HepG2 (cell line): ENCODE measurements at regions of chr16 and their contacts with region 1.

Region 1: DNA sequence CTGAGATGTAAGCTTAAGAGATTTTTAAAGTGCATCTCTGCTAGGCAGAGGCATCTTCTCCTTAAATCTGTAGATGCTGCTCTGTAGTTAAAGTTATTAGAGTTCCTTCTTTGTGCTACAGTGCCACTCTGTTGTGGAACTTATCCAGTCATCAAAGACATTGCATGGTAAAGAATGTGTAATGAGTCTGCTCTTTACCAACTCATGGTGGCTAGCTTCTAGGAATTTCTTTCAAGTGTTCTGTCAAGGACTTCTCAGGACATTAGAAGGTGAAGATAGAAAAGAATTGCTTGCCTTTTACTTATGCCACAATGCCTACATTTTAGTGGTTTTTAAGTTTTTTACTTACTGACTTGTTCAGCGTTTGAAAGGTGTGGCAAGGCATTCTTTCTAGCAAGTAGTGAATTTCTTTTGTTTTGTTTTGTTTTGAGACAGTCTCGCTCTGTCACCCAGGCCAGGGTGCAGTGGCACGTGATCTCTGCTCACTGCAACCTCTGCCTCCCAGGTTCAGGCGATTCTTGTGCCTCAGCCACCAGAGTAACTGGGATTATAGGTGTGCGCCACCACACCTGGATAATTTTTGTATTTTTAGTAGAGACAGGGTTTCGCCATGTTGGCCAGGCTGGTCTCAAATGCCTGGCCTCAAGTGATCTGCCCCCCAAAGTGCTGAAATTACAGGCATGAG is 20.3 kb upstream of the ARL2BP start:
- DNase-seq: no peak
- ATAC-seq: no peak
- H3K4me3 ChIP-seq: no peak overlapping the region
- H3K27ac ChIP-seq: no peak overlapping the region
- H3K4me1 ChIP-seq: no peaks in the 10 kb centered on the region
- H3K27me3 ChIP-seq: no peaks in the 10 kb centered on the region
- CTCF ChIP-seq: no peak
- EP300 ChIP-seq: no peak
- POLR2A ChIP-seq: no peak
- RAD21 ChIP-seq: no peak

Region 2: GRCh38 chr16:56294579-56294978 is 930.2 kb before region 1 on chr16:
- CTCF ChIA-PET with region 1: no interaction called
- POLR2A ChIA-PET with region 1: no interaction called
- in situ Hi-C with region 1: no loop called
- intact Hi-C with region 1: loop called (anchors 5 kb)
- DNase-seq: no peak
- ATAC-seq: no peak
- H3K4me3 ChIP-seq: no peak overlapping the region
- H3K27ac ChIP-seq: no peak overlapping the region
- H3K4me1 ChIP-seq: no peaks in the 10 kb centered on the region
- H3K27me3 ChIP-seq: peaks cover 1 to 12% of the 10 kb centered on the region in 2 experiments; a peak in 3 of 5 replicates
- CTCF ChIP-seq: no peak
- EP300 ChIP-seq: no peak
- POLR2A ChIP-seq: no peak
- RAD21 ChIP-seq: no peak

Region 3: DNA sequence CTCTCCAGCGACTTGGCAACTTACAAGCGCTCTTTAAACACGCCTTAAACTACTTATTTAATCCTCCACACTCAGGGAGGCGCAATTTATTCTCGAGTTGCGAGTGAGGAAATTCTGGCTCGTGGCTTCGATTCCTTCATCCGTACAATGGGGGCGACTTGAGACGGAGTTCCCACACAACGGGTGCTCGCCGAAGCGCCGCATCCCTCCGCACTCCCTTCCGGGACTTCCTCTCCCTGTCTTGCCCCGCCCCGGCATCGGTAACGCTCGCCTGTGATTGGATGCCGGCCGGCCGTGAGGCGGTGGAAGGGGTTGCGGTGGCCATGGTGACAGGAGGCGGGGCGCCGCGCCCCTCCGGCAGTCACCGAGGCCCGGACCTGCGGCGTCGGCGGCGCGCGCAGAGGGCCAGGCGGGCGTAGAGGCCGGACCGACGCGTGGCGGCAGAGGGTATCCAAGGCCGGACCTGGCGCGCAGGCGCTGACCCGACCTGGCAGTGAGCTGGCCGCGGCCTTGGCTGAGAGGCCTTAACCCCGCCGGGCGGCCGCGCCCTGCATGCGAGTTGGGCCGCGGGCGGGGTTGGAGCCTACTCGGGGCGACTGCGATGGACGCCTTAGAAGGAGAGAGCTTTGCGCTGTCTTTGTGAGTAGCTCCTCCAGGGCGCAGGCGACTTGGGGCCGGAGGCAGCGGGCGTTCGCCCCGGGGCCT is 20.1 kb after region 1 on chr16 and contains the start of gene ARL2BP:
- CTCF ChIA-PET with region 1: no interaction called
- POLR2A ChIA-PET with region 1: no interaction called
- in situ Hi-C with region 1: no loop called
- intact Hi-C with region 1: no loop called
- DNase-seq: peak; percentile 96
- ATAC-seq: peak; percentile 96
- H3K4me3 ChIP-seq: peak within 1 kb of the TSS; percentile 77 to 89 (median 81)
- H3K27ac ChIP-seq: peak within 1 kb of the TSS; percentile 91
- H3K4me1 ChIP-seq: peaks cover 40% of the 10 kb centered on the region
- H3K27me3 ChIP-seq: no peaks in the 10 kb centered on the region
- CTCF ChIP-seq: no peak; the same call in none of the 2 replicates
- EP300 ChIP-seq: 0 out of 4 replicates have a peak, but pooled peaks of 1 of the 2 experiments have one; percentile 7
- POLR2A ChIP-seq: peak; percentile 82 to 84
- RAD21 ChIP-seq: peak; percentile 79
- total RNA-seq, gene ARL2BP: 67.6 and 97.1 TPM in 2 replicates